Colonic mucosa (tissue), 4 donors: ENCODE measurements at regions of chr17 and their contacts with region 1.

Region 1: GRCh38 chr17:68771867-68772515 is 170.8 kb upstream of the FAM20A start:
- DNase-seq: peak; percentile 25
- H3K4me3 ChIP-seq: no peak overlapping the region
- H3K27ac ChIP-seq: no peak overlapping the region
- H3K4me1 ChIP-seq: no peaks in the 10 kb centered on the region
- H3K27me3 ChIP-seq: no peaks in the 10 kb centered on the region
- CTCF ChIP-seq: peak; percentile 40

Region 2: DNA sequence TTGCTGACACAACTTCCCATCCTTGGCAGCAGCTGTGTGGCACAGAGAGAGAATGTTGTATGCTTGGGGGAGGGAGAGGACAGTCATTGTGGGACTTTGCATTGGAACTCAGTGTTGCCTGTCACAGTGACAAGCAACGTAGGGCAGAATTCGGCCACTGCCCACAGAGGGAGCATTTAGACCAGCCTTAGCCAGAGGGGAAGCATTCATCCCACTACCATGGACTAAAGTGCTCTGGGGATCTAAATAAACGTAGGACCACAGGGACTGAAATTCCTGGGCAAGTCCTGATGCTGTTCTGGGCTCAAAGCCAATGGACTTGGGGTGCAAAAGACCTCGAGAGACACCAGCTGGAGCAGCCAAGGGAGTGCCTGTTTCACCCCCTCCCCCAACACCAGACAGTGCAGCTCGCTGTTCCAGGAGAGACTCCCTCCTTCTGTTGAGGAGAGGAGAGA is 138.3 kb after region 1 on chr17:
- intact Hi-C with region 1: loop called (anchors 10 kb)
- DNase-seq: no peak
- H3K4me3 ChIP-seq: no peak overlapping the region
- H3K27ac ChIP-seq: peak overlapping the region; percentile 4
- H3K4me1 ChIP-seq: no peaks in the 10 kb centered on the region
- H3K27me3 ChIP-seq: no peaks in the 10 kb centered on the region
- CTCF ChIP-seq: no peak

Region 3: GRCh38 chr17:69058165-69058564 is 286.2 kb after region 1 on chr17:
- intact Hi-C with region 1: loop called (anchors 10 kb)
- DNase-seq: no peak
- H3K4me3 ChIP-seq: no peak overlapping the region
- H3K27ac ChIP-seq: no peak overlapping the region
- H3K4me1 ChIP-seq: no peaks in the 10 kb centered on the region
- H3K27me3 ChIP-seq: no peaks in the 10 kb centered on the region
- CTCF ChIP-seq: peak; percentile 19